CD4-positive, alpha-beta T cell (primary cell): ENCODE measurements at regions of chr11 and their contacts with region 1.

Region 1: DNA sequence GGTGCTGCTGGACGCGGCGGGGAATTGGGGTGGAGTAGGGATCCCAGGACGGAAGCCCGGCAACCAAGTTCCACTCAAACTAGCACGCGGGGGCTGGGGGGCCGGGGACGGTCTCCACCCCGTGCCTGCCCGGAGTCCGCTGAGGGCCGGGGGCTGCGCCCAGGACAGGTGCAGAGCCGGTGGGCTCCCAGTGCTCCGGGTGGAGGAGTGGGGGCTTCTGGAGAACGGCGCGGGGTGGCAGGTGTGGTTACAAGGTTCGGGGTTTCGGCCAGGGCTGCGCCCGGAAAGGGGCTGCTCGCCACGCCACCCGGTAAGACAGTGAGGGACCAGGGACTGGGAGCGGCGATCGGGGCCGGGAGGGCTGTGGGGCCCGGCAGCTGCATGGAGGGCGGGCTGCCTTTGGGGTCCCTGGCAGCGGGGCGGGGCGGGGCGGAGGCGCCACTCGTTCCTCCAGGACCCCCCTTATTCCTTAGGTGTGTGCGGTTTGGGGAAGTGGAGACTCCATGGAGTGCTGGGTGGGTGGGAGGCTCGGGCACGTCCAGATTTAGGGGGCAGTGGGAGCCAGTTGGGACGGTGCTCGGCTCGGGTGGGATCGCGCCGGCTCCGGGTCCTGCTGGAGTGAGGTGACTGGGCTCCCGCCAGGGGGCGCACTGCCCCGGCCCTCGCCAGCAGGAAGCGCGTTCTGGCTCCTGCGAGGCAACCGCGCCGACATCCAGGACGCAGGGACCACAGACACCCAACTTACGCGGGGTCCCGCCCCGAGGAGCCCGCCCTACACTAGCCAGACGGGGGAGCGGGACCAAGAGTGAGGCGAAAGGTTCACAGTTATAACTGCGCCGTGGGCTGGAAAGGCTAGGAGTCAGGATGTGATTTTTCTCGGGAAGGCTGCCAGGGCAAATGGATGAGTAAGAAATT is 868 bp downstream of the TSPAN18 start:
- DNase-seq: peak; percentile 59 to 90 (median 75)
- ATAC-seq: peak; percentile 75
- H3K4me3 ChIP-seq: peak overlapping the region; percentile 86
- H3K4me3 Mint-ChIP-seq: peak overlapping the region; percentile 90
- H3K27ac ChIP-seq: no peak overlapping the region
- H3K27ac Mint-ChIP-seq: peak overlapping the region; percentile 60
- H3K4me1 ChIP-seq: peaks cover 61% of the 10 kb centered on the region
- H3K4me1 Mint-ChIP-seq: peaks cover 39% of the 10 kb centered on the region
- H3K27me3 ChIP-seq: no peaks in the 10 kb centered on the region
- H3K27me3 Mint-ChIP-seq: peaks cover 38% of the 10 kb centered on the region
- CTCF ChIP-seq: peak; percentile 99

Region 2: GRCh38 chr11:44556735-44557409 is 170.8 kb before region 1 on chr11:
- CTCF ChIA-PET with region 1: no interaction called
- POLR2A ChIA-PET with region 1: no interaction called
- intact Hi-C with region 1: loop called in 1 of 2 experiments (anchors 5 kb)
- DNase-seq: peak; percentile 57 to 83 (median 64)
- ATAC-seq: peak; percentile 71
- H3K4me3 ChIP-seq: no peak overlapping the region
- H3K4me3 Mint-ChIP-seq: no peak overlapping the region
- H3K27ac ChIP-seq: no peak overlapping the region
- H3K27ac Mint-ChIP-seq: peak overlapping the region; percentile 37
- H3K4me1 ChIP-seq: peaks cover 20% of the 10 kb centered on the region
- H3K4me1 Mint-ChIP-seq: peaks cover 35% of the 10 kb centered on the region
- H3K27me3 ChIP-seq: no peaks in the 10 kb centered on the region
- H3K27me3 Mint-ChIP-seq: no peaks in the 10 kb centered on the region
- CTCF ChIP-seq: peak; percentile 86

Region 3: GRCh38 chr11:44621140-44621681 is 106.4 kb before region 1 on chr11:
- CTCF ChIA-PET with region 1: no interaction called
- POLR2A ChIA-PET with region 1: no interaction called
- intact Hi-C with region 1: loop called in 1 of 2 experiments (anchors 5 kb)
- DNase-seq: peak; percentile 30 to 80 (median 60)
- ATAC-seq: peak; percentile 69
- H3K4me3 ChIP-seq: no peak overlapping the region
- H3K4me3 Mint-ChIP-seq: no peak overlapping the region
- H3K27ac ChIP-seq: no peak overlapping the region
- H3K27ac Mint-ChIP-seq: no peak overlapping the region
- H3K4me1 ChIP-seq: peaks cover 38% of the 10 kb centered on the region
- H3K4me1 Mint-ChIP-seq: peaks cover 36% of the 10 kb centered on the region
- H3K27me3 ChIP-seq: no peaks in the 10 kb centered on the region
- H3K27me3 Mint-ChIP-seq: no peaks in the 10 kb centered on the region
- CTCF ChIP-seq: peak; percentile 65

Region 4: DNA sequence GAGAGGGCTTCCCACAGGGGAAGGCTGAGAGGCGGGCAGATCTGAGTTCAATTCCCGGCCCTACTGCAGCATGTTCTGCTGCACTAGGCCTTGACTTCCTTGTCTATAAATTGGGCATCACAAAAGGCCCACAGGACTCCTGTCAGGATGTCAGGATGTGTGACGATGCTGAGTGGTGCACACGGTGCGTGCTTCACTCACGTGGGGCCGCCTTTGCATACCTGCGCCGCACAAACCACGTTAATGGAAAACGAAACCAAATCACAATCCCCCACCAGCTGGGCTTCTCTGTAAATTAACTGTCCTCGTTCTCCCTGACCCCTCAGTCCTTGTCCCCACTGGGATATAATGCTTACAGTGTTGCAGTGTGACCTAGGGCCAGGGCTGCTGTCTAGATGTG is 33.2 kb before region 1 on chr11:
- CTCF ChIA-PET with region 1: no interaction called
- POLR2A ChIA-PET with region 1: no interaction called
- intact Hi-C with region 1: no loop called
- DNase-seq: peak in 4 of 14 experiments; percentile 11 to 62 (median 26)
- ATAC-seq: no peak
- H3K4me3 ChIP-seq: no peak overlapping the region
- H3K4me3 Mint-ChIP-seq: no peak overlapping the region
- H3K27ac ChIP-seq: no peak overlapping the region
- H3K27ac Mint-ChIP-seq: no peak overlapping the region
- H3K4me1 ChIP-seq: peaks cover 25% of the 10 kb centered on the region
- H3K4me1 Mint-ChIP-seq: no peaks in the 10 kb centered on the region
- H3K27me3 ChIP-seq: no peaks in the 10 kb centered on the region
- H3K27me3 Mint-ChIP-seq: peaks cover 6% of the 10 kb centered on the region
- CTCF ChIP-seq: no peak

Region 5: DNA sequence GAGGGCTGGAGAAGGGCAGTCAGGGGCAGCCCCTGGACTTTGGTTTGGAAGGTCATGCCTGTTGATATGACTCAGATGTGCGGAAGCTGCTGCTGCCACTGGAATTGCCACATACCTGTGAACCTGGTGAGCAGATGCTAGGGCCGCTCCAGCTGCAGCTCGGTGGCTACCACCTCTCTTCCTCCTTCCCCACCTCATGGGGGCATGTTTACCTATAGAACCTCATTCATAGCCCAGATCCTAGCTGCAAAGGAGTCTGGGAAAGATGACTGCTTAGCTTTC is 18.4 kb before region 1 on chr11:
- CTCF ChIA-PET with region 1: no interaction called
- POLR2A ChIA-PET with region 1: no interaction called
- intact Hi-C with region 1: no loop called
- DNase-seq: no peak
- ATAC-seq: no peak
- H3K4me3 ChIP-seq: no peak overlapping the region
- H3K4me3 Mint-ChIP-seq: no peak overlapping the region
- H3K27ac ChIP-seq: no peak overlapping the region
- H3K27ac Mint-ChIP-seq: no peak overlapping the region
- H3K4me1 ChIP-seq: peaks cover 26% of the 10 kb centered on the region
- H3K4me1 Mint-ChIP-seq: peaks cover 27% of the 10 kb centered on the region
- H3K27me3 ChIP-seq: peaks cover 0 to 2% of the 10 kb centered on the region in 2 experiments
- H3K27me3 Mint-ChIP-seq: peaks cover 5% of the 10 kb centered on the region
- CTCF ChIP-seq: no peak

Region 6: DNA sequence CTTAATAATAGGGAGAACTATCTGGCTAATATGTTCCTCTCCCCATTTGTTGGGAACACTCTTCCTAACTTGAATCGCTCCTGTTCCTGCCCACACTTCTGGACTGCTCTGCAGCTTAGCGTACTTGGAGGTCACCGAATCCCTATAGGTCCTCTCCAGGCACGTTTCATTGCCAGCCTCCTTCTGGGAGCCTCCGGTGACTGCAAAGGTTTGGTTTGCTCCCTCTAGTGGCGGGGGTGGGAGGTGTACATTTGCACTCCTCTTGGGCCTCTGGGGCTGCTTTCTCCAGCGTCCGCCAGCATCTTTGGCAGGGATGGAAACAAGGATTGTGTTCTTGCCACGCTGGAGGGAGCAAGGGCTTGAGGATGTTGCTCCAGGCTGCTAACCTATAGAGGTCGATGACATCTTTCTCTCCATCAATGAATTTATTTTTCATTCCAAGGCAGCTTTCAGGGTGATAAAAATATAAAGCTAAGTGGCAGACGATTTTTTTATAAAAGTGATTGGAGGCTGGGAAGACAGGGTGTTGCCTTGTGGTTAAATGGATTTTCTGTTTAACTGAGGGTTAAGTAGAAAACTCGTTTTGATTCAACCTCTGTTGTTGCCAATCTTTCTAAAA is 47.8 kb after region 1 on chr11:
- CTCF ChIA-PET with region 1: interaction called, 7 read pairs
- POLR2A ChIA-PET with region 1: interaction called, 3 read pairs
- intact Hi-C with region 1: loop called (anchors 2 kb)
- DNase-seq: peak; percentile 27 to 79 (median 50)
- ATAC-seq: peak; percentile 37
- H3K4me3 ChIP-seq: no peak overlapping the region
- H3K4me3 Mint-ChIP-seq: no peak overlapping the region
- H3K27ac ChIP-seq: no peak overlapping the region
- H3K27ac Mint-ChIP-seq: no peak overlapping the region
- H3K4me1 ChIP-seq: peaks cover 17% of the 10 kb centered on the region
- H3K4me1 Mint-ChIP-seq: peaks cover 22% of the 10 kb centered on the region
- H3K27me3 ChIP-seq: no peaks in the 10 kb centered on the region
- H3K27me3 Mint-ChIP-seq: peaks cover 6% of the 10 kb centered on the region
- CTCF ChIP-seq: peak; percentile 73

Region 7: GRCh38 chr11:44893846-44894617 is 166.4 kb after region 1 on chr11:
- CTCF ChIA-PET with region 1: no interaction called
- POLR2A ChIA-PET with region 1: no interaction called
- intact Hi-C with region 1: loop called (anchors 5 kb)
- DNase-seq: peak; percentile 13 to 77 (median 50)
- ATAC-seq: peak; percentile 67
- H3K4me3 ChIP-seq: no peak overlapping the region
- H3K4me3 Mint-ChIP-seq: no peak overlapping the region
- H3K27ac ChIP-seq: no peak overlapping the region
- H3K27ac Mint-ChIP-seq: no peak overlapping the region
- H3K4me1 ChIP-seq: peaks cover 5% of the 10 kb centered on the region
- H3K4me1 Mint-ChIP-seq: no peaks in the 10 kb centered on the region
- H3K27me3 ChIP-seq: no peaks in the 10 kb centered on the region
- H3K27me3 Mint-ChIP-seq: no peaks in the 10 kb centered on the region
- CTCF ChIP-seq: peak; percentile 44

Region 8: GRCh38 chr11:44911029-44911814 is 183.6 kb after region 1 on chr11:
- CTCF ChIA-PET with region 1: no interaction called
- POLR2A ChIA-PET with region 1: interaction called, 4 read pairs
- intact Hi-C with region 1: loop called (anchors 2 kb)
- DNase-seq: peak; percentile 60 to 93 (median 82)
- ATAC-seq: peak; percentile 83
- H3K4me3 ChIP-seq: no peak overlapping the region
- H3K4me3 Mint-ChIP-seq: no peak overlapping the region
- H3K27ac ChIP-seq: no peak overlapping the region
- H3K27ac Mint-ChIP-seq: no peak overlapping the region
- H3K4me1 ChIP-seq: peaks cover 9% of the 10 kb centered on the region
- H3K4me1 Mint-ChIP-seq: peaks cover 7% of the 10 kb centered on the region
- H3K27me3 ChIP-seq: no peaks in the 10 kb centered on the region
- H3K27me3 Mint-ChIP-seq: no peaks in the 10 kb centered on the region
- CTCF ChIP-seq: peak; percentile 77

Region 9: DNA sequence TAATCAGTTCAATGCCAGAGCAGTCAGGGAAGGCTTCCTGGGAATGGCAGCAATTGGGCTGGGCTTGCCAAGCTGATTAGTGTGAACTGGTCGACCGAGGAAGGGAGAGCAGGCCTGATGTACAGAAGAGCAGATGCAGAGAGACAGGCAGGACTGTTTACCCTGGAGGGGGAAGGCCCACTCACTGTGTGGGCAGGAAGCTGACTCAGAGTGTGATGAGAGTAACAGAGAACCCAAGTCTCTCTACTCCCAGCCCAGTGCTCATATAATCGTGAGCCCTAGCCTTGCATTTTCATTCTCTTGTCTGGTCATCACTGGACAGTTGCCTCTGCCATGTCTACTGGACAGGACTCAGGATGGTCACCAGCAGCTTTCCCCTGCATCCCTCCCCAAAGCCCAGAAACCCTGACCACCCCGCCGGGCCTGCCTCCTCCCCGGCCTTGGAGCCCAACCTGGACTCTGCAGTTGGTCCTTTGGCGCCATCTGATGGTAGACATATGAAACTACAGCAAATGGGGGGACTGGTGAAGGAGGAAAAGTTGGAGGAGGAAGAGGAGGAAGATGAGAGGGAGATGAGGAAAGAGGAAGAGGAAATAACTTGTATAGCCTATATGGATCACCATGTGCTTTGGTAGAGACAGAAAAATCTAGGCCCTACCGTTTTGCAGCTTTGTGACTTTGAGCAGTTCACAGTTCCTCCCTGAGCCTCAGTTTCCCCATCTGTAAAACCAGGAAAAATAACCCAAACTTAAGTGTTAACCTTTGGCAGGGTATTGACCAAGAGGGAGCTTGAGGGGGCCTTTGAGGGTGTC is 375.4 kb after region 1 on chr11:
- CTCF ChIA-PET with region 1: no interaction called
- POLR2A ChIA-PET with region 1: no interaction called
- intact Hi-C with region 1: loop called in 1 of 2 experiments (anchors 10 kb)
- DNase-seq: peak; percentile 25 to 84 (median 53)
- ATAC-seq: peak; percentile 80
- H3K4me3 ChIP-seq: no peak overlapping the region
- H3K4me3 Mint-ChIP-seq: no peak overlapping the region
- H3K27ac ChIP-seq: no peak overlapping the region
- H3K27ac Mint-ChIP-seq: no peak overlapping the region
- H3K4me1 ChIP-seq: peaks cover 31% of the 10 kb centered on the region
- H3K4me1 Mint-ChIP-seq: peaks cover 21% of the 10 kb centered on the region
- H3K27me3 ChIP-seq: no peaks in the 10 kb centered on the region
- H3K27me3 Mint-ChIP-seq: peaks cover 5% of the 10 kb centered on the region
- CTCF ChIP-seq: peak; percentile 98